Activated CD8-positive, alpha-beta T cell treated with anti-CD3 and anti-CD28 coated beads for 36 hours (primary cell): ENCODE measurements at regions of chr2 and their contacts with region 1.

Region 1: DNA sequence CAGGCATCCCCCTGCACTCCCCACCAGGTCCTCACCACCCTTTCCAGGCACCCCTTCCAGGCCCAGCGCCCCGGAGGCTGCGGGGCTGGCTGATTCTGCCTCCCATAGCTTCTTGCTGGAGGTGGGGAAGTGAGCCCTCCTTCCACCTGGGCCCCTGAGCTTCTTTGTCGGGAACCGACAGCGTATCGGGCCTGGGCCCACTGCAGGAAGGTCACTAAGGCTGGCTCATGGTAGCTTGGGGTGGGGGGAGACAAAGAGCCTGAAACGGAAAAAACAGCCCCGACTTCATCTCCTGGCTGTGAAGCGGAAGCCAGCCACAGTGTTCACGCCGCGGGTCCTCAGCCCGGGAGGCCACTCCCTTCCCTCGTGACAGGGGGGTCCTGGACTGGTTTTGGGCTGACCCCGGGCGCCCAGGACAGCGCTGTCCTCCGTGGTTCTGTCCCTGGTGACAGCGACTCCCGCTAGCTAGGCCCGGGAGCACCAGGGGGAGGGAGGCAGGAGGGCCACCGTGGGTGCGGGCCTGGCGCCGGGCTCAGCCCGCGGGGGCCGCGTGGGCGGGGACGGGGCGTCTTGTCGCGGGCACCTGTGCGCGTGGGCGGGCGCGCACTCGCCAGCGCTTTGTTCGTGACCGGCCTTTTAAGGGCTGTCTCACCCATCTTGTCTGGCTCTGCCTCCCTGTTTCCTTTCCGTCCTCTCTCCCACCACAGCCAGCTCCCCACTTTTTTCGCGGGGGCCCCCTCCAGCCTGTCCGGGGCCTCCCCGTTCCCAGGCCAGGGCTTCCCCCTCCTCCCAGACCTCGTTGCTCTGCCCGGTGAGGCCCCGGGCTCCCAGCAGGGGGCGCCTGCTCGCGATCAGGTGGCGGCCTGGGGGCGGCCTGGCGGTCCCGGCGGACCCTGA is 64.9 kb downstream of the DNMT3A start:
- DNase-seq: peak; percentile 90
- ATAC-seq: peak; percentile 66
- H3K4me3 Mint-ChIP-seq: peak overlapping the region; percentile 57
- H3K27ac Mint-ChIP-seq: peak overlapping the region; percentile 96
- H3K4me1 Mint-ChIP-seq: peaks cover 76% of the 10 kb centered on the region
- H3K27me3 Mint-ChIP-seq: no peaks in the 10 kb centered on the region
- CTCF ChIP-seq: peak; percentile 97

Region 2: DNA sequence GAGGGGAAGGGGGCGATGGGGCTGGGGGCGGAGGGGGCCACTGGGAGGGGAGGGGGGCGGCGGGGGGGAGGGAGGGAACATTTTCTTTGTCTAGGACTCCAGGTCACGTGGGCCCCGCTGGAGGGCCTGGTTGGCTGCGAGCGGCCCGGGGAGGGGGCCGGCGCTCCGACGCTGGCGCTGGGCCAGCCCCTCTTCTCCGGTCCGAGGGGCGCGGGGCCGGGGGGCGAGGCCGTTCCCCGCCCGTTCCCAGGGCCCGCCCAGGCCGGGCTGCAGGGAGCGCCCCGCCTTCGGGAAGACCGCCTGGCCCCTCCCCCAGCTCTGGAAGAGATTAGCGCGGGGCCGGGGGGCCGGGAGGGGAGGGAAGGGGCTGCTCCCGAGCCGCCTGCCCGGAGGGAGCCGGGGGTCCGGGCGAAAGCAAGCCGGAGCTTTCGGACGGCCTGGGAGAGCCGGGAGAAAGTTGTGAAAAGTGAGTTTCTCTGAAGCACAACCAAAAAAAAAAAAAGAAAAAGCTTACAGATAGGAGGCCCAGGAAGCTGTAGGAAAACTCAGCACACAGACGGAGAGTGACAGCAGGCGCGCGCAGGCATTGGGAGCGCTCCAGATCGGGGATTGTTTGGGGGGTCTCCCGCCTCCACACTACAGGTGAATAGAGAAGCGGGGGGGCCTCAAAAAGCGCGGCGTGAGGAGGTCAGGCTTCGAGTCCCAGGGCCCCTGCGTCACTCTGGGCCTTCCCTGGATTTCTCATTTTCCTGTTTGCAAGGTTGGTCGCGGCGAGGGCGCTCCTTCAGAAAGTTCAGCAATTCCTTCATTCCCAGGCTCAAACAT is 24.3 kb before region 1 on chr2:
- CTCF ChIA-PET with region 1: interaction called, 9 read pairs
- POLR2A ChIA-PET with region 1: interaction called, 12 read pairs
- intact Hi-C with region 1: no loop called
- DNase-seq: peak; percentile 70
- ATAC-seq: peak; percentile 51
- H3K4me3 Mint-ChIP-seq: peak overlapping the region; percentile 87
- H3K27ac Mint-ChIP-seq: peak overlapping the region; percentile 66
- H3K4me1 Mint-ChIP-seq: peaks cover 34% of the 10 kb centered on the region
- H3K27me3 Mint-ChIP-seq: no peaks in the 10 kb centered on the region
- CTCF ChIP-seq: no peak

Region 3: GRCh38 chr2:25294573-25295462 is 18.0 kb after region 1 on chr2:
- CTCF ChIA-PET with region 1: interaction called, 26 read pairs
- POLR2A ChIA-PET with region 1: interaction called, 13 read pairs
- intact Hi-C with region 1: no loop called
- DNase-seq: peak; percentile 90
- ATAC-seq: peak; percentile 94
- H3K4me3 Mint-ChIP-seq: peak overlapping the region; percentile 63
- H3K27ac Mint-ChIP-seq: peak overlapping the region; percentile 89
- H3K4me1 Mint-ChIP-seq: peaks cover 71% of the 10 kb centered on the region
- H3K27me3 Mint-ChIP-seq: no peaks in the 10 kb centered on the region
- CTCF ChIP-seq: no peak

Region 4: GRCh38 chr2:25314514-25315315 is 37.9 kb after region 1 on chr2:
- CTCF ChIA-PET with region 1: interaction called, 25 read pairs
- POLR2A ChIA-PET with region 1: interaction called, 23 read pairs
- intact Hi-C with region 1: loop called (anchors 5 kb)
- DNase-seq: peak; percentile 98
- ATAC-seq: peak; percentile 81
- H3K4me3 Mint-ChIP-seq: peak overlapping the region; percentile 88
- H3K27ac Mint-ChIP-seq: peak overlapping the region; percentile 96
- H3K4me1 Mint-ChIP-seq: peaks cover 63% of the 10 kb centered on the region
- H3K27me3 Mint-ChIP-seq: no peaks in the 10 kb centered on the region
- CTCF ChIP-seq: no peak

Region 5: GRCh38 chr2:25362049-25362433 is 85.2 kb after region 1 on chr2:
- CTCF ChIA-PET with region 1: interaction called, 20 read pairs
- POLR2A ChIA-PET with region 1: interaction called, 5 read pairs
- intact Hi-C with region 1: no loop called
- DNase-seq: peak; percentile 97
- ATAC-seq: peak; percentile 93
- H3K4me3 Mint-ChIP-seq: peak overlapping the region; percentile 80
- H3K27ac Mint-ChIP-seq: peak overlapping the region; percentile 97
- H3K4me1 Mint-ChIP-seq: peaks cover 17% of the 10 kb centered on the region
- H3K27me3 Mint-ChIP-seq: no peaks in the 10 kb centered on the region
- CTCF ChIP-seq: peak; percentile 90

Region 6: GRCh38 chr2:25521665-25522387 is 245.0 kb after region 1 on chr2:
- CTCF ChIA-PET with region 1: interaction called, 4 read pairs
- POLR2A ChIA-PET with region 1: no interaction called
- intact Hi-C with region 1: loop called (anchors 10 kb)
- DNase-seq: peak; percentile 55
- ATAC-seq: peak; percentile 99
- H3K4me3 Mint-ChIP-seq: peak overlapping the region; percentile 28
- H3K27ac Mint-ChIP-seq: peak overlapping the region; percentile 86
- H3K4me1 Mint-ChIP-seq: peaks cover 12% of the 10 kb centered on the region
- H3K27me3 Mint-ChIP-seq: no peaks in the 10 kb centered on the region
- CTCF ChIP-seq: peak; percentile 86